ENCODE measurements at regions of chr11 and their contacts with region 1.

Region 1: DNA sequence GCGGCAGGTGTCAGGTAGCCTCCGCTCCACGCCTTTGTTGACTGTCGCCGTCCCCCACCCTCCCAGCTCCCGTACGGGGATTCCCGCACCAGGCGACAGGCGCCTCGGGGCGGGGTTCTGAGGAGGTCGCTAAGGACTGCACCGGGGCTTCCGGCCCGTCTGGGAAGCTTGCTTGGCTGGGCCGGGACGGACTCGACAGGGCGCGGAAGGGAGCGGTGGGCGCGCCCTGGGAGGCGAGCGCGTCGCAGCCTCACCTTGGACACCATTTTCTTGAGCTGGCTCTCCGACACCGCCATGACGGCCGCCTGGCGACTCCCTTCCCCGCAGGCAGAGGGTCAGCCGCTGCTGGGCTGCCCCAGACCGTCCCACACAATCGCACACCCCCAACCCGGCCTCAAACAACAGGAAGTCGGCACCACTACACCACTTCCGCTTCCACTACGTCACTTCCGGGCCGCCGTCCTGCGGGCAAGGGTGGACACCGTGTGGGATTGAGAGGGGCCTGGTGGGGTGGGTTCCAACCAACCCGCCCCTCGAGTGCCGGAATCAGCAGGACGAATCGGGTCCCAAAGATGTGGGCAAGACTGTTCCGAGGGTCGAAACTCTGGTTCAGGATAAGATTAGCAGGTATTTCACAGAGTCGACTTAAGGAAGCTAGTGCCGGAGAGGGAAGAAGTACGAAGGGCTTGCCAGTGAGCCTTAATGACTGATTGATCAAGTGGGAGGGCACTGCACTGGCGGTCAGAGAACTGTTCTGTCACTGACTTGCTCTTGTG is at the start of gene TSG101:
- DNase-seq: peak; percentile 97
- ATAC-seq: peak; percentile 99
- total RNA-seq, gene TSG101: 62.6 TPM

Region 2: GRCh38 chr11:18321980-18322711 is 204.6 kb before region 1 on chr11 and contains the starts of genes GTF2H1 and HPS5:
- intact Hi-C with region 1: loop called (anchors 5 kb)
- DNase-seq: peak; percentile 96
- ATAC-seq: peak; percentile 99
- total RNA-seq, gene GTF2H1: 23.9 TPM
- total RNA-seq, gene HPS5: 10.5 TPM

Region 3: GRCh38 chr11:18698341-18699268 is 171.9 kb after region 1 on chr11 and contains the start of gene TMEM86A:
- intact Hi-C with region 1: loop called (anchors 5 kb)
- DNase-seq: peak; percentile 97
- ATAC-seq: peak; percentile 92
- total RNA-seq, gene TMEM86A: 4.6 TPM

Measured in Right ventricle myocardium inferior (tissue), 1 donor.